B cell (primary cell): ENCODE measurements at regions of chrX and their contacts with region 1.

Region 1: DNA sequence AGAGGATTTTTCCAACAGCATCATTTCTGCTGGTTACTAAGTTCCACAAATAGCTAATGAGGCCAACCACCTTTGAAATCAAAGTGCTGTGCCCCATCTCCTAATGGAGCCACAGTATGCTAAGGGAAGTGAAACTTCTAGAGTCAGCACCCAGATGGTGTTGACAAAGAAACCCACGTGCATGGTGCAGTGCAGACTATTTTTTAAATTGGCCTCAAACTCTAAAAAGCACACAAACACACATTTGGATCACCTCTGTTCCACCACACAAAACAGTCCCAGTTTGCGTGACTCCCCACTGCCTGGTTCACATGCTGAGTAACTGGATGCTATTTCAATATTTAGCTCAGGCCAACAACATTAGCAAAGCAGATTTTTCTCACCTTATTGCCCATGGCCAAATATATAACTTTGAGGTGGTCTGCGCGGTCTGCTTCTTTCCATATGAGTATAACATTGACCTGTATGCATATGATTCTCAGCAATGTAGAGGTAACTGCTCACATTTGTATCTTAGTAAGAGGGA is 69.9 kb downstream of the AMELX start:
- DNase-seq: peak; percentile 81
- ATAC-seq: peak; percentile 95
- H3K4me3 ChIP-seq: no peak overlapping the region
- H3K4me3 Mint-ChIP-seq: peak overlapping the region; percentile 53
- H3K27ac ChIP-seq: peak overlapping the region; percentile 62 to 75
- H3K27ac Mint-ChIP-seq: peak overlapping the region; percentile 91
- H3K4me1 ChIP-seq: peaks cover 12 to 21% of the 10 kb centered on the region in 2 donors
- H3K4me1 Mint-ChIP-seq: peaks cover 26% of the 10 kb centered on the region
- H3K27me3 ChIP-seq: no peaks in the 10 kb centered on the region
- H3K27me3 Mint-ChIP-seq: no peaks in the 10 kb centered on the region
- CTCF ChIP-seq: no peak

Region 2: GRCh38 chrX:10199212-10199611 is 1163.9 kb before region 1 on chrX:
- CTCF ChIA-PET with region 1: no interaction called
- POLR2A ChIA-PET with region 1: no interaction called
- intact Hi-C with region 1: loop called (anchors 2 kb)
- DNase-seq: peak; percentile 88
- ATAC-seq: peak; percentile 91
- H3K4me3 ChIP-seq: no peak overlapping the region
- H3K4me3 Mint-ChIP-seq: peak overlapping the region; percentile 56
- H3K27ac ChIP-seq: peak overlapping the region; percentile 83 to 88
- H3K27ac Mint-ChIP-seq: peak overlapping the region; percentile 81
- H3K4me1 ChIP-seq: peaks cover 32 to 39% of the 10 kb centered on the region in 2 donors
- H3K4me1 Mint-ChIP-seq: peaks cover 34% of the 10 kb centered on the region
- H3K27me3 ChIP-seq: no peaks in the 10 kb centered on the region
- H3K27me3 Mint-ChIP-seq: no peaks in the 10 kb centered on the region
- CTCF ChIP-seq: no peak

Region 3: GRCh38 chrX:11341274-11342201 is 21.6 kb before region 1 on chrX:
- CTCF ChIA-PET with region 1: interaction called, 3 read pairs
- POLR2A ChIA-PET with region 1: interaction called, 4 read pairs
- intact Hi-C with region 1: loop called (anchors 1 kb)
- DNase-seq: peak; percentile 80
- ATAC-seq: peak; percentile 66
- H3K4me3 ChIP-seq: peak overlapping the region in 2 of 5 experiments; percentile 20 to 31
- H3K4me3 Mint-ChIP-seq: peak overlapping the region; percentile 69
- H3K27ac ChIP-seq: peak overlapping the region; percentile 90 to 95
- H3K27ac Mint-ChIP-seq: peak overlapping the region; percentile 95
- H3K4me1 ChIP-seq: peaks cover 18 to 24% of the 10 kb centered on the region in 2 donors
- H3K4me1 Mint-ChIP-seq: peaks cover 47% of the 10 kb centered on the region
- H3K27me3 ChIP-seq: no peaks in the 10 kb centered on the region
- H3K27me3 Mint-ChIP-seq: no peaks in the 10 kb centered on the region
- CTCF ChIP-seq: no peak

Region 4: GRCh38 chrX:11351375-11352295 is 11.5 kb before region 1 on chrX:
- CTCF ChIA-PET with region 1: interaction called, 3 read pairs
- POLR2A ChIA-PET with region 1: no interaction called
- intact Hi-C with region 1: loop called (anchors 1 kb)
- DNase-seq: peak; percentile 60
- ATAC-seq: peak; percentile 52
- H3K4me3 ChIP-seq: no peak overlapping the region
- H3K4me3 Mint-ChIP-seq: peak overlapping the region; percentile 26
- H3K27ac ChIP-seq: peak overlapping the region; percentile 82 to 93
- H3K27ac Mint-ChIP-seq: peak overlapping the region; percentile 90
- H3K4me1 ChIP-seq: peaks cover 25 to 27% of the 10 kb centered on the region in 2 donors
- H3K4me1 Mint-ChIP-seq: peaks cover 36% of the 10 kb centered on the region
- H3K27me3 ChIP-seq: no peaks in the 10 kb centered on the region
- H3K27me3 Mint-ChIP-seq: no peaks in the 10 kb centered on the region
- CTCF ChIP-seq: no peak

Region 5: GRCh38 chrX:11381464-11381863 is 18.3 kb after region 1 on chrX:
- CTCF ChIA-PET with region 1: interaction called, 3 read pairs
- POLR2A ChIA-PET with region 1: no interaction called
- intact Hi-C with region 1: loop called (anchors 2 kb)
- DNase-seq: peak; percentile 64
- ATAC-seq: peak; percentile 79
- H3K4me3 ChIP-seq: no peak overlapping the region
- H3K4me3 Mint-ChIP-seq: no peak overlapping the region
- H3K27ac ChIP-seq: no peak overlapping the region
- H3K27ac Mint-ChIP-seq: no peak overlapping the region
- H3K4me1 ChIP-seq: no peaks in the 10 kb centered on the region
- H3K4me1 Mint-ChIP-seq: peaks cover 11% of the 10 kb centered on the region
- H3K27me3 ChIP-seq: peaks cover 0 to 3% (median 0%) of the 10 kb centered on the region in 4 experiments
- H3K27me3 Mint-ChIP-seq: peaks cover 9% of the 10 kb centered on the region
- CTCF ChIP-seq: peak; percentile 61

Region 6: DNA sequence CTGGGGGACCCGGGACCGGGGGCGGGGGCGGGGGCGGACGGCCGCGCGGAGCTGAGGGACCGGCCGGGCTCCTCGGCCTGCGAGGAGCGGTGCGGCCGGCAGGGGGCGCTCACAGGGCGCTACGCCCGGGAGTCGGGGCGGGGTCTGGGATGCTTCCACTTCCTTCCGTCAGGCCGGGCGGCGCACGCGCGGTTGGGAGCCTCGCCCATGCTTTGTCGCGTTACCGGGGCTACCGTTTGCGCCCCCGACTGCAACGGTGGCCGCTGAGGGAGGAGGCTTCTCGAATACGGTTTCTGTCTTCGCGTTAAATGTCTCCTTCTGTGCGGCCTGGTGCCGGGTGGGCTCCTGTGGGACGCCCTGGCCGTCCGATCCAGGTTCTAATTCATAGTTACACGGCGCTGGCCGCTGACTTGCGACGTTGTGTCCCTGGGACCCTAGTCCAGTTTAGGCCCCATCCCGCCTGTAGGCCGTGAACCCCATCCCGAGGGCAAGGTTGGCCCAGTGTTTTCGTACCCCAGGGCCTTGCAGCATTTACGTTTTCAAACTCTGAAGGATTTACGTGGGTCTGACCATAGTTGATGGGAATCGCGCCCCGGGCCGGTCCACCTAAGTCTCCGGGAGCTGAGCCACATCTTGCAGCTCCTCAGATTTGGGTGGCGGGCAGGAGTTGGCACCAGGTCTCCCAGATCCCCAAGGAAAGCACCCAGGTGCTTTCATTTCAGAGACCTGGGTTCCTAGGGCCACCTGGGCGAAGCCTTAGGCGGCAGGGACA is 395.5 kb after region 1 on chrX:
- CTCF ChIA-PET with region 1: no interaction called
- POLR2A ChIA-PET with region 1: no interaction called
- intact Hi-C with region 1: loop called (anchors 5 kb)
- DNase-seq: peak; percentile 90
- ATAC-seq: peak; percentile 66
- H3K4me3 ChIP-seq: peak overlapping the region; percentile 70 to 86 (median 74)
- H3K4me3 Mint-ChIP-seq: peak overlapping the region; percentile 93
- H3K27ac ChIP-seq: peak overlapping the region; percentile 89
- H3K27ac Mint-ChIP-seq: peak overlapping the region; percentile 86
- H3K4me1 ChIP-seq: peaks cover 7 to 22% of the 10 kb centered on the region in 2 donors
- H3K4me1 Mint-ChIP-seq: peaks cover 32% of the 10 kb centered on the region
- H3K27me3 ChIP-seq: no peaks in the 10 kb centered on the region
- H3K27me3 Mint-ChIP-seq: no peaks in the 10 kb centered on the region
- CTCF ChIP-seq: peak; percentile 68